A673 (cell line): ENCODE measurements at regions of chr6 and their contacts with region 1.

Region 1: GRCh38 chr6:132962936-132963868 is 148.8 kb downstream of the RPS12 start:
- DNase-seq: peak; percentile 78
- H3K4me3 ChIP-seq: no peak overlapping the region
- H3K27ac ChIP-seq: no peak overlapping the region
- H3K4me1 ChIP-seq: no peaks in the 10 kb centered on the region
- H3K27me3 ChIP-seq: peaks cover 36% of the 10 kb centered on the region
- CTCF ChIP-seq: peak; percentile 90

Region 2: DNA sequence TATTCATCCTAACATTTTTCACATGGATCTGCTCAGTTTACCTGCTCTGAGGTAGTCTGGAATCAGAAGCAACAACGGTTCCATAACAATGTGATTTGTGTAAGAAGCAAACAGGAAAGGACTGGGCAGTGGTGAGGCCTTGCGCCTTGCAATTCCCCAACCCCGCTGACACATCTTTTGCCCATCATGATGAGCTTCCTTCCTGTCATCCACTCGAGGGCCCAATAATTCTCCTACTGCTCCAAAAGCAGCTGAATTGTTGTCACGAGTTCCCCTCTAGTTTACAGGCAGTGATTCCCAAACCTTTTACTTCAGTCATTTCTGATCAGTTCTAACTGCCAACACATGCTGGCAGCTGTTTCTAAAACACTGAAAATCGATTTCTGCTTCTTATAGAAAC is 473.2 kb before region 1 on chr6:
- CTCF ChIA-PET with region 1: no interaction called
- POLR2A ChIA-PET with region 1: no interaction called
- intact Hi-C with region 1: no loop called
- DNase-seq: no peak
- H3K4me3 ChIP-seq: no peak overlapping the region
- H3K27ac ChIP-seq: no peak overlapping the region
- H3K4me1 ChIP-seq: peaks cover 12% of the 10 kb centered on the region
- H3K27me3 ChIP-seq: no peaks in the 10 kb centered on the region
- CTCF ChIP-seq: no peak

Region 3: GRCh38 chr6:132830334-132830751 is 132.9 kb before region 1 on chr6:
- CTCF ChIA-PET with region 1: interaction called, 7 read pairs
- POLR2A ChIA-PET with region 1: no interaction called
- intact Hi-C with region 1: loop called (anchors 1 kb)
- DNase-seq: peak; percentile 64
- H3K4me3 ChIP-seq: no peak overlapping the region
- H3K27ac ChIP-seq: no peak overlapping the region
- H3K4me1 ChIP-seq: no peaks in the 10 kb centered on the region
- H3K27me3 ChIP-seq: no peaks in the 10 kb centered on the region
- CTCF ChIP-seq: peak; percentile 66

Region 4: GRCh38 chr6:133191323-133191722 is 228.1 kb after region 1 on chr6:
- CTCF ChIA-PET with region 1: no interaction called
- POLR2A ChIA-PET with region 1: no interaction called
- intact Hi-C with region 1: loop called (anchors 5 kb)
- DNase-seq: no peak
- H3K4me3 ChIP-seq: no peak overlapping the region
- H3K27ac ChIP-seq: no peak overlapping the region
- H3K4me1 ChIP-seq: no peaks in the 10 kb centered on the region
- H3K27me3 ChIP-seq: peaks cover 4% of the 10 kb centered on the region
- CTCF ChIP-seq: no peak

Region 5: GRCh38 chr6:133286765-133287164 is 323.6 kb after region 1 on chr6:
- CTCF ChIA-PET with region 1: no interaction called
- POLR2A ChIA-PET with region 1: no interaction called
- intact Hi-C with region 1: loop called (anchors 5 kb)
- DNase-seq: peak; percentile 80
- H3K4me3 ChIP-seq: no peak overlapping the region
- H3K27ac ChIP-seq: no peak overlapping the region
- H3K4me1 ChIP-seq: peaks cover 5% of the 10 kb centered on the region
- H3K27me3 ChIP-seq: no peaks in the 10 kb centered on the region
- CTCF ChIP-seq: peak; percentile 72

Region 6: DNA sequence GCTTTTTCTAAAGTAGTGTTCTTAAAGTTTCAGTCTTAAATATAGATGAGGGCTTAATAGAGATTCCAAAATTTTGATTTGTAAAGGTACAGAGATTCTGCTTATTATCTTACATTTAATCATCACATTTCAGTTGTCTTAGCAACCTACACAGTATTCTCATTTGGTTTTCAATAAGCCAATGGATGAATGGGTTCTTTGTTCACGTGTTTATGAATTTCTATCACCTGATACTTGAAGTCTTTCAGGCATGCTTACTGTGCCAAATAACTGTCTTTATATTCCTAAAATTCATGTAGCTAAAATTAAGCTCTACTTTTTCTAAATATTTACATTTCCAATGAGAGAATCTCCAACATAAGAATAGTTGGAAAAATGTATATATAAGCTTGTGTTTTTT is 430.7 kb after region 1 on chr6:
- CTCF ChIA-PET with region 1: interaction called, 18 read pairs
- POLR2A ChIA-PET with region 1: no interaction called
- intact Hi-C with region 1: no loop called
- DNase-seq: no peak
- H3K4me3 ChIP-seq: no peak overlapping the region
- H3K27ac ChIP-seq: no peak overlapping the region
- H3K4me1 ChIP-seq: peaks cover 32% of the 10 kb centered on the region
- H3K27me3 ChIP-seq: no peaks in the 10 kb centered on the region
- CTCF ChIP-seq: no peak

Region 7: GRCh38 chr6:133553652-133554051 is 590.5 kb after region 1 on chr6:
- CTCF ChIA-PET with region 1: no interaction called
- POLR2A ChIA-PET with region 1: no interaction called
- intact Hi-C with region 1: loop called (anchors 5 kb)
- DNase-seq: peak; percentile 64
- H3K4me3 ChIP-seq: no peak overlapping the region
- H3K27ac ChIP-seq: no peak overlapping the region
- H3K4me1 ChIP-seq: no peaks in the 10 kb centered on the region
- H3K27me3 ChIP-seq: no peaks in the 10 kb centered on the region
- CTCF ChIP-seq: peak; percentile 69